H1 (cell line): ENCODE measurements at regions of chr1 and their contacts with region 1.

Region 1: DNA sequence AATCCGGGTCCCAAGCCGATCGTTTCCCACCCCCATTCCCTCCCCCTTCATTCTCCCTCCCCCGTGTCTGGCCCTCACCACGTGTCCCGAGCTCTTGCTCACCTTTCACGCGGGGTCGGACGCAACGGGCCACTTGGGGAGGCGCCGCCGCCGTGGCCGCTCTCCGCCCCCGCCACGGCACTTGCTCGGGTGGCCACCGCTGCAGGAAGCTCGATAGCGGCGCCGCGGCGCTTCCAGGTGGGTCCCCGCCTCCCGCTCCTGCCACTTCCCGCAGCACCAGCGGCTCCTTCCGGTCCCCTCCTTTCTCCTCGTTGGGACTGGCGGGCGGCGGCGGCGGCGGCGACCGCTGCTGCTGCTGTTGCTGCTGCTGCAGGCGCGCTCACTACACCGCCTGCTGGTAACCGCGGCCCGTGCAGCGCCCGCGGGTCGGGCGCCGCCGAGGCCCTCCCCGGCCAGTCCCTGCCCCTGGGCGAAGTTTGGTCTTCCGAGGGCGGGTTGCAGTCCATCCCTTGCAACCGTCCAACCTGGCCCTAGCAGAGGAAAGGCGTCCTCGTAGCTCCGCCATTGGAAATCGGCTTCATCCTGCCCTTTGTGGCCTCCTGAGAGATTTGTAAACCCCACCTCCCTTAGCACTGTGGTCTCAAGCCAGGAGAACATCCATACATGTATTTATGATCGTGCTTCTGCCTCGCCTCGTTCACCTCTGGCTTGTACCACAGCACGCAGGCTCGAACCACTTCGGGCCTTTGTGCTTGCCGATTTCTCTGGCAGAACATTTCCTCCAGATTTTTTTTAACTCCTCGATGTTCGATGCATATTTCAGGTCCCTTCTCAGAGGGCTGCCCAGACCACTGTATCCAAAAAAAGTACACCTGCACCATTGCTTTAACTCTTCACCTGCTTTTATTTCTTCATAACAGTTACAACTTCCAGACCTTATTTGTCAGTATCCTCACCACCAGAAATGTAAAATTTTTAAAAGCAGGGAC is 996 bp upstream of the ZZZ3 start:
- DNase-seq: peak; percentile 75 to 90
- H3K4me3 ChIP-seq: peak overlapping the region; percentile 74 to 98 (median 92)
- H3K27ac ChIP-seq: peak overlapping the region; percentile 95
- H3K4me1 ChIP-seq: no peaks in the 10 kb centered on the region; a peak in 2 of 7 replicates
- H3K27me3 ChIP-seq: no peaks in the 10 kb centered on the region
- CTCF ChIP-seq: peak; percentile 70 to 83 (median 75)
- EP300 ChIP-seq: peak in 1 of 2 experiments; percentile 45; a peak in 1 of 3 replicates
- POLR2A ChIP-seq: peak; percentile 47 to 85
- RAD21 ChIP-seq: peak; percentile 54 to 69

Region 2: DNA sequence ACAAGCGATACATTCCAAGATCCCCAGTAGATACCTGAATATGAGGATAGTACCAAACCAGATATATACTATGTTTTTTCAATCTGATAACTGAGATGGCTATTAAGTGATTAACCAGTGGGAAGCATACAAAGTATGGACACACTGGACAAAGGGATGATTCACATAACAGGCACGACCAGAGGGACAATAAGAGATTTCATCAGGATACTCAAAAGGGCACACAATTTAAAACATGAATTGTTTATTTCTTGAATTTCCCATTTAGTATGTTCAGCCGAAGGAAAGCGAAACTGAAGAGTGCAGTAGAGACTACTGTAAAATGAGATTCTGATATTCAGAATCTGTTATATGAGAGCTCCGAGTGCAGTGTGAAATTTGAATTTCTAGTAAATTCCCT is 11.6 kb before region 1 on chr1:
- CTCF ChIA-PET with region 1: interaction called, 4 read pairs
- POLR2A ChIA-PET with region 1: interaction called, 57 read pairs
- DNase-seq: no peak
- H3K4me3 ChIP-seq: no peak overlapping the region
- H3K27ac ChIP-seq: no peak overlapping the region
- H3K4me1 ChIP-seq: peaks cover 0 to 4% (median under 1%) of the 10 kb centered on the region in 4 experiments; a peak in 2 of 7 replicates
- H3K27me3 ChIP-seq: no peaks in the 10 kb centered on the region
- CTCF ChIP-seq: no peak
- EP300 ChIP-seq: no peak
- POLR2A ChIP-seq: no peak
- RAD21 ChIP-seq: no peak

Region 3: DNA sequence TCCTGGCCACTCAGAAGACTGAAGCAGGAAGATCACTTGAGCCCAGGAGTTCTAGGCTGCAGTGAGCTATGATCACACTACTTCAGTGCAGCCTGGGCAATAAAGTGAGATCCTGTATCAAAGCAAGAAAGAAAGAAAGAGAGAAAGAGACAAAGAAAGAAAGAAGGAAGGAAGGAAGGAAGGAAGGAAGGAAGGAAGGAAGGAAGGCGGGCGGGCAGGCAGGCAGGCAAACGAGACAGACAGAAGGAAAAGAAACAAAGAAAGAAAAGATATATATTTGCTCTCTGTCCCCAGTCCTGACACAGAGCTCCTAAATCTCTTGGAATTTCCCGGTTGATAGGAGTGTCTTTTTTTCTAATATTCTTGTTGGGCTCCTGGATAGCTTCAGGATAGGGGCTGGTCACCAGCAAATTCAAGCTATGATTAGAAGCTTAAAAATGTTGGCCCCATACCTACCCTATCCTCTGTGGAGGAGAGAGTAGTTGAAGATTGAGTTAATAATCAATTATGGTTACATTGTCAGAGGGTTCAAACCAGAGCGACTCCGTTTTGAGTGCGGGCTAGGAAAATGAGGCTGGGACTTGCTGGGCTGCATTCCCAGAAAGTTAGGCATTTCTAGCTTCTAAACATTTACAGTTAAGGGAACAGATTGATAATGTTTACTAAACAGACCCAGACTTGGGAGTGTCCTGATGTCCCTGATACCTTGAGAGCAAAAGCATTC is 92.7 kb after region 1 on chr1:
- CTCF ChIA-PET with region 1: no interaction called
- POLR2A ChIA-PET with region 1: no interaction called
- DNase-seq: no peak
- H3K4me3 ChIP-seq: no peak overlapping the region
- H3K27ac ChIP-seq: no peak overlapping the region
- H3K4me1 ChIP-seq: no peaks in the 10 kb centered on the region
- H3K27me3 ChIP-seq: no peaks in the 10 kb centered on the region
- CTCF ChIP-seq: no peak
- EP300 ChIP-seq: no peak
- POLR2A ChIP-seq: no peak
- RAD21 ChIP-seq: no peak